Natural killer cell (primary cell): ENCODE measurements at regions of chr6 and their contacts with region 1.

Region 1: GRCh38 chr6:49409951-49410542 is 53.0 kb downstream of the MMUT start:
- DNase-seq: peak; percentile 39 to 70
- ATAC-seq: peak; percentile 64 to 78 (median 71)
- H3K4me3 ChIP-seq: no peak overlapping the region
- H3K4me3 Mint-ChIP-seq: no peak overlapping the region
- H3K27ac ChIP-seq: no peak overlapping the region
- H3K27ac Mint-ChIP-seq: no peak overlapping the region
- H3K4me1 ChIP-seq: no peaks in the 10 kb centered on the region
- H3K4me1 Mint-ChIP-seq: no peaks in the 10 kb centered on the region
- H3K27me3 ChIP-seq: no peaks in the 10 kb centered on the region
- H3K27me3 Mint-ChIP-seq: peaks cover 6 to 8% of the 10 kb centered on the region in 2 donors
- CTCF ChIP-seq: peak; percentile 87

Region 2: DNA sequence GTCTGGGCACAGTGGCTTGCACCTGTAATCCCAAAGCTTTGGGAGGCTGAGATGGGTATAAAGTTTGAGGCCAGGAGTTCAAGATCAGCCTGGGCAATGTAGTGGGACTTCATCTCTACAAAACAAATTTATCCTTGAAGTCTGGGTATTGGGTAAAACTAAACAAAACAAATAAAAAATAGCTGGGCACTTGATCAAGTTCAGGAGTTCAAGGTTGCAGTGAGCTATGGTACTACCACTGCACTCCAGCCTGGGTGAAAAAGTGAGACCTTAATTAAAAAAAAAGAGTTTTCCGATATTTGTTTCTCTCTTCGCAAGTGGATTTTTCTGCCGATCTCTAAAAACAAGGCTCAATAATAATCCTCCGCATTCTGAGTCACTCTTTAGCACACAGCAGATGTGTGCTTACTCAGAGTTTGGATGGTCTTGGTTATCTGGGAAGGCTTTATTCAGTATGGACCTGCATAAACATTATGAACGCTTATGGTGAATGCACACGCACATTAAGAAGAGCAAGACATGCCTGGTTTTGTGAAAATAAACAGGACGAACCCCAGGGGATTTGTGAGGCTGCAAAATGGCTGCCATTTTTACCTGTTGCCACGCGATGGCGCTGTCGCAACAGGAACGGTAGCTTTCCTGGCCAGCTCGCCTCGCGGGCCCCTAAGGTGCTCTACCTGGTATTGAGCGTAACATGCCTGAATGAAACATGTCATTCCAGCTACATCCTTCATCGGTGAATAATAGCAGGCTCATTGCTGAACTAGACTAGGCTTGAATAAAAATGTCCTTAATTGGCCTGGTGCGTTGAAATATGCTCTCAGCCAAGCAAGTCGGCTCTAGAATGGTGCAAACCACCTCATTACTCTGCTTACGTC is 1622.2 kb before region 1 on chr6:
- intact Hi-C with region 1: loop called (anchors 2 kb)
- DNase-seq: peak; percentile 28 to 66
- ATAC-seq: peak; percentile 36 to 69 (median 60)
- H3K4me3 ChIP-seq: no peak overlapping the region
- H3K4me3 Mint-ChIP-seq: no peak overlapping the region
- H3K27ac ChIP-seq: no peak overlapping the region
- H3K27ac Mint-ChIP-seq: no peak overlapping the region
- H3K4me1 ChIP-seq: peaks cover 4% of the 10 kb centered on the region
- H3K4me1 Mint-ChIP-seq: no peaks in the 10 kb centered on the region
- H3K27me3 ChIP-seq: peaks cover 2% of the 10 kb centered on the region
- H3K27me3 Mint-ChIP-seq: peaks cover 17 to 51% of the 10 kb centered on the region in 2 donors
- CTCF ChIP-seq: peak; percentile 71

Region 3: GRCh38 chr6:47934023-47934422 is 1476.0 kb before region 1 on chr6:
- intact Hi-C with region 1: no loop called
- DNase-seq: no peak
- ATAC-seq: no peak
- H3K4me3 ChIP-seq: no peak overlapping the region
- H3K4me3 Mint-ChIP-seq: no peak overlapping the region
- H3K27ac ChIP-seq: no peak overlapping the region
- H3K27ac Mint-ChIP-seq: no peak overlapping the region
- H3K4me1 ChIP-seq: no peaks in the 10 kb centered on the region
- H3K4me1 Mint-ChIP-seq: no peaks in the 10 kb centered on the region
- H3K27me3 ChIP-seq: no peaks in the 10 kb centered on the region
- H3K27me3 Mint-ChIP-seq: no peaks in the 10 kb centered on the region
- CTCF ChIP-seq: no peak

Region 4: GRCh38 chr6:49370518-49370917 is 39.5 kb before region 1 on chr6:
- intact Hi-C with region 1: no loop called
- DNase-seq: no peak
- ATAC-seq: no peak
- H3K4me3 ChIP-seq: no peak overlapping the region
- H3K4me3 Mint-ChIP-seq: no peak overlapping the region
- H3K27ac ChIP-seq: no peak overlapping the region
- H3K27ac Mint-ChIP-seq: no peak overlapping the region
- H3K4me1 ChIP-seq: no peaks in the 10 kb centered on the region
- H3K4me1 Mint-ChIP-seq: no peaks in the 10 kb centered on the region
- H3K27me3 ChIP-seq: no peaks in the 10 kb centered on the region
- H3K27me3 Mint-ChIP-seq: no peaks in the 10 kb centered on the region
- CTCF ChIP-seq: no peak